GM12878 (cell line): ENCODE measurements at regions of chr15 and their contacts with region 1.

Region 1: GRCh38 chr15:93052090-93052879 is 36.7 kb downstream of the RGMA start:
- DNase-seq: no peak
- ATAC-seq: peak; percentile 55; the same call in 2 of the 3 replicates
- H3K4me3 ChIP-seq: no peak overlapping the region
- H3K27ac ChIP-seq: no peak overlapping the region
- H3K4me1 ChIP-seq: no peaks in the 10 kb centered on the region
- H3K27me3 ChIP-seq: no peaks in the 10 kb centered on the region; a peak in 1 of 4 replicates
- CTCF ChIP-seq: peak; percentile 24 to 33 (median 29); a peak in 4 of 6 replicates
- EP300 ChIP-seq: no peak
- POLR2A ChIP-seq: no peak
- RAD21 ChIP-seq: no peak

Region 2: GRCh38 chr15:93035953-93036800 is 16.1 kb before region 1 on chr15:
- CTCF ChIA-PET with region 1: no interaction called
- POLR2A ChIA-PET with region 1: no interaction called
- RAD21 ChIA-PET with region 1: no interaction called
- SMC1A ChIA-PET with region 1: no interaction called
- in situ Hi-C with region 1: no loop called
- intact Hi-C with region 1: loop called (anchors 1 kb)
- DNase-seq: no peak
- ATAC-seq: peak; percentile 91
- H3K4me3 ChIP-seq: no peak overlapping the region
- H3K27ac ChIP-seq: no peak overlapping the region
- H3K4me1 ChIP-seq: no peaks in the 10 kb centered on the region
- H3K27me3 ChIP-seq: no peaks in the 10 kb centered on the region
- CTCF ChIP-seq: peak; percentile 64 to 74 (median 66)
- EP300 ChIP-seq: no peak
- POLR2A ChIP-seq: no peak
- RAD21 ChIP-seq: peak; percentile 24; the same call in 1 of the 2 replicates

Region 3: GRCh38 chr15:93288728-93289294 is 236.5 kb after region 1 on chr15:
- CTCF ChIA-PET with region 1: no interaction called
- POLR2A ChIA-PET with region 1: no interaction called
- RAD21 ChIA-PET with region 1: no interaction called
- SMC1A ChIA-PET with region 1: no interaction called
- in situ Hi-C with region 1: no loop called
- intact Hi-C with region 1: no loop called
- DNase-seq: no peak
- ATAC-seq: no peak
- H3K4me3 ChIP-seq: no peak overlapping the region
- H3K27ac ChIP-seq: no peak overlapping the region
- H3K4me1 ChIP-seq: no peaks in the 10 kb centered on the region
- H3K27me3 ChIP-seq: 0 out of 4 replicates have a peak, but pooled peaks cover 0 to 1% of the 10 kb centered on the region in 2 experiments
- CTCF ChIP-seq: no peak
- EP300 ChIP-seq: no peak
- POLR2A ChIP-seq: no peak
- RAD21 ChIP-seq: no peak

Region 4: DNA sequence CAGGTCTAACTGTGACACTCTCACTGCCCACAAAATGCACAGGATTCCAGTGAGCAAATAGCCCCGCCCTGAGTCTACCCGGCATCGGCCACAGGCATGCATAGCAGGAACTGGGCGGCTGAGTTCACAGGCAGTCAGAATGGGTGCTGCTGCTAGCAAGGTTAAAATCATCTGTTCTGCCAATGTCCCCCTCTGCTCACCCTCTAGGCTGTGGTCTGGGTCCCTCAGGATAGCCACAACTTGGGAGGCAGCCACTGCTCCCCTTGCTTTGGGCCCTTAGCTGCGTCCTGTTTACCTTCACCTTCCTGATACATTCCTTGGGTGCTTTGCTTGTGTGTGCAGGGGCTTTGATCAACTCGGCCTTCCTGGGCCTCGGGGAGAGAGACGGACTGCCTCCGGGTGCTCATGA is 269.6 kb after region 1 on chr15:
- CTCF ChIA-PET with region 1: no interaction called
- POLR2A ChIA-PET with region 1: no interaction called
- RAD21 ChIA-PET with region 1: no interaction called
- SMC1A ChIA-PET with region 1: no interaction called
- in situ Hi-C with region 1: no loop called
- intact Hi-C with region 1: no loop called
- DNase-seq: no peak
- ATAC-seq: no peak
- H3K4me3 ChIP-seq: no peak overlapping the region
- H3K27ac ChIP-seq: no peak overlapping the region
- H3K4me1 ChIP-seq: no peaks in the 10 kb centered on the region
- H3K27me3 ChIP-seq: no peaks in the 10 kb centered on the region
- CTCF ChIP-seq: no peak
- EP300 ChIP-seq: no peak
- POLR2A ChIP-seq: no peak
- RAD21 ChIP-seq: no peak